ENCODE measurements at regions of chr17 and their contacts with region 1.

Region 1: DNA sequence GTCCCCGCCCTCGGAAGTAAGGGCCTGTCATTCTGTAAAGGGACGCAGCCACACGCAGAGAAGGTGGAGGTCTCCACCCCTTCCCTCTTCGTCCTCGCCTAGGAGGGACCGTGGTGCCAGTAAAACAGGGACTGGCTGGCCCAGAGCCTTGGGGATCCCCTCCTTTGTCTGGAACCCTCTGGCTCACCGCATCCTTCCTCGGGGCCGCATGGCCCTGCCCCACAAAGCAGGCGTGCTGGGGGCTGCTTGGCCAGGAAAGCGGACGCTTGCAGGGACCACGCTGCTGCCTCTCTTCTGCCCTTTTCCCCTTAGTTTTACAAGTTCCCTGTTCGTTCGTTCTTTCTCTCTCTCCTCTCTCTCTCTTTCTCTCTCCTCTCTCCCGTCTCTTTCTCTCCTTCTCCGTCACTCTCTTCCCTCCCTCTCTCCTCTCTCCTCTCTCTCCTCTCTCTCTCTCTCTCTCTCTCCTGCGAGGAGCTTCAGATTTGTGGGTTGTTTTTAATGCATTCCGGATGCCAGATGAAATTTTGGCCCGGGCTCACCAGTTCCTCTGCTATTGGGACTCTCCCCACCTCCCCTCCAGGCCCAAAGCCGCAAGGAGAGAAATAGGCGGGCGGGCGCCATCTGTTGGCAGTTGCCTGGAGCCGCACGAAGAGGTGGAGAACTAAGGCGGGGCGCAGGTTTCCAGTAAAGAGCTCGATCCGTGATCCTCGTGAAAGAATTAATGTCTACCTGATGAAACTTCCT is 35.1 kb upstream of the CDRT4 start:
- DNase-seq: peak; percentile 83
- CTCF ChIP-seq: peak; percentile 92

Region 2: GRCh38 chr17:15257258-15257788 is 245.2 kb before region 1 on chr17:
- CTCF ChIA-PET with region 1: interaction called, 75 read pairs
- POLR2A ChIA-PET with region 1: no interaction called
- DNase-seq: peak; percentile 75
- CTCF ChIP-seq: peak; percentile 78

Region 3: GRCh38 chr17:15262291-15263205 is 240.0 kb before region 1 on chr17:
- CTCF ChIA-PET with region 1: interaction called, 75 read pairs
- POLR2A ChIA-PET with region 1: no interaction called
- DNase-seq: no peak
- CTCF ChIP-seq: no peak

Region 4: GRCh38 chr17:15490634-15491261 is 11.8 kb before region 1 on chr17:
- CTCF ChIA-PET with region 1: interaction called, 10 read pairs
- POLR2A ChIA-PET with region 1: no interaction called
- DNase-seq: no peak
- CTCF ChIP-seq: no peak

Measured in GM10248 (cell line).